Activated naive CD4-positive, alpha-beta T cell treated with anti-CD3 and anti-CD28 coated beads for 36 hours (primary cell): ENCODE measurements at regions of chr2 and their contacts with region 1.

Region 1: DNA sequence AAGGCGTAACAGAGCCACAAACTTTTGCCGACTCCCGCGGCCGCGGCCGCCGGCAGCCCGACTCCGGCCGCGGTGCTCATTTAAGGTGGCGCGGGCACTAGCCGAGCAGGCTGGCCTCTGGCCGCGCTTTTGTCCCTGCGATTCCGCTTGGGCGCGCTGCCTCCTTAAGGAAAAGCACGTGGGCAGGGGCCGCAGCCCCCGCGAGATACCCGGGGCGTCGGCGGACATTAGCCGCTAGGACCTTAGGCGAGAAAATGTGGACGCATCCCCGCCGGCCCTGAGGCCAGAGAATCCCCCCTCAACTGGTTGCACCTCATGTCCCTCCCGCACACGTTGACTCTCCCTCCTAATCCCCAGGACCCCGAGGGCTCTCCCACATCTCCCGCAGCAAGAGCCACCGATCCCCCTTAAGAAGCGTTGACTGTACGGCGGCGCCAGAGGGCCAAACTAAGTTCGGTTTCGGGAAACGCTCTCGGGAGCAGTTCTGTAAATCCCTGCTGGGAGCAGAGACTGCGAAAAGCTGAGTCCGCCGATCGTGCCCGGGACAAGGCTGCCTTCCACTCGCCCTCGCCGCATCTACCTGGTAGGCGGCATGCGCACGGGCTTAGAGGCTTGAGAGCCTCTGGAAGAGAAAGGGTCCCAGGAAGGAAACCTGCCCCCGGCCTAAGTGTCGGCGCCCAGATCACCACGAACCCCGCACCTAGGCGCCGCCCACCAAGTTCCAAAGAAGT is 1.7 kb upstream of the SATB2 start:
- DNase-seq: peak; percentile 73
- H3K4me3 Mint-ChIP-seq: peak overlapping the region; percentile 90
- H3K27ac Mint-ChIP-seq: peak overlapping the region; percentile 47
- H3K4me1 Mint-ChIP-seq: peaks cover 29% of the 10 kb centered on the region
- H3K27me3 Mint-ChIP-seq: peaks cover 56% of the 10 kb centered on the region

Region 2: GRCh38 chr2:197813093-197813787 is 1646.2 kb before region 1 on chr2:
- CTCF ChIA-PET with region 1: no interaction called
- intact Hi-C with region 1: loop called (anchors 1 kb)
- DNase-seq: no peak
- H3K4me3 Mint-ChIP-seq: no peak overlapping the region
- H3K27ac Mint-ChIP-seq: no peak overlapping the region
- H3K4me1 Mint-ChIP-seq: peaks cover 57% of the 10 kb centered on the region
- H3K27me3 Mint-ChIP-seq: no peaks in the 10 kb centered on the region

Region 3: DNA sequence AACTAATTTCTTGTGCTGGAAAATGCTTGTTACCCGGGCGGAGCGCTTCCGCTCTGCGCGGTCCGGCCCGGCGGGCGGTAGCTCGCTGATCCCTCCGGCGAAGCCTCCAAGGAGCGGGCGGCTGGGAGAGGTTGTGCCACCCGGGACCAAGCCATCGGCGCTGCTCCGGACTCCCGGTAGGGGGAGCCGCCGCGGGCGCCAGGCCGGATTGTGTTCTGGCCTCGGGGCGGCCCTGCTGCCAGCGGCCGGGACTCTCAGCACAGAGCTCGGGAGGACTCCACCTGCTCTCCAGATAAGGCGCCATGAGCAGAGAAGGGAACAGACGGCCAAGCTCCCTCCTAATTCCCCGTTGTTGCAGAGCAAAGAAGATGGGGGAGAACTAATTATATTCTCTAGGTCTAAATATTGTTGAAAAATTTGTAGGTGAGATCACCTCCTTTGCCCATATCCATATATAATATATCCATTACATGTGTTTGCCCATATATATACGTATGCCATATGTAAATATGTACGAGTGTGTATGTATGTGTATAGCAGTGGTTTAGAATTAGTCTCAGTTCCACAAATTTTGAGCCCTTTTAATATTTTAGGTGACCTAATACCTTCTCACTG is 12.1 kb after region 1 on chr2:
- CTCF ChIA-PET with region 1: interaction called, 3 read pairs
- intact Hi-C with region 1: loop called (anchors 1 kb)
- DNase-seq: peak; percentile 44
- H3K4me3 Mint-ChIP-seq: no peak overlapping the region
- H3K27ac Mint-ChIP-seq: no peak overlapping the region
- H3K4me1 Mint-ChIP-seq: peaks cover 25% of the 10 kb centered on the region
- H3K27me3 Mint-ChIP-seq: peaks cover 78% of the 10 kb centered on the region

Region 4: DNA sequence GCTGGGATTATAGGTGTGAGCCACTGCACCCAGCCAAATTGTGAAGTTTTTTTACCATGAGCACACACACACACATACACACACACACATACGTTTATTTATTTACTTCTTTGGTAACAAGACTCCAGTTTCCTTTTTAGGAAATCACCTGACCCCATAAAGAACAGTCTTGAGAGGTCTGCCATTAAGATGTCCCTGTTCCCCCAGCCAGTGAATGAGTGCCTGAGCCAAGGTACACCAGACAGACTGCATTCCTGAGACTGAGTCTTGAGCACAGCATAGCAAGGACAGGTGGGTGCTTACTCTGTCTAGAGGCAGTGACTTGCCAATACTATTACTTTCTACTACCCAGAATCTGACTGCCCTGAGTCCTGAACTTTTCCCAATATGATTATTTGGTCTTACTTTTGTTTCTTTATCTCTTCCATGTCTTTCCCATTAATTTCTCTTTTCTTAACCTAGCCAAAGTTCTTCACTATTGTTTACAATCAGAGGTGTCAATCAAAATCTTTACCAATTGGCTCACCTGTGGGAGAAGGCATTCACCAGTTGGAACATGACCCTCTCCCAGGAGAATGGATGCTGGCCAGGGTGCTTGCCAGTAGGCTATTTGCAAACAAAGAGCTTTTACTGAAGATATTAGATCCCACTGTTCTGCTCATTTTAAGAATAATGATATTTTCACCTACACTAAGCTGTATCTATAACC is 165.6 kb after region 1 on chr2:
- CTCF ChIA-PET with region 1: no interaction called
- intact Hi-C with region 1: no loop called
- DNase-seq: no peak
- H3K4me3 Mint-ChIP-seq: no peak overlapping the region
- H3K27ac Mint-ChIP-seq: no peak overlapping the region
- H3K4me1 Mint-ChIP-seq: no peaks in the 10 kb centered on the region
- H3K27me3 Mint-ChIP-seq: peaks cover 4% of the 10 kb centered on the region

Region 5: GRCh38 chr2:199850718-199851500 is 391.5 kb after region 1 on chr2 and contains the start of gene FTCDNL1:
- CTCF ChIA-PET with region 1: no interaction called
- intact Hi-C with region 1: loop called (anchors 10 kb)
- DNase-seq: peak; percentile 67
- H3K4me3 Mint-ChIP-seq: peak within 1 kb of the TSS; percentile 96
- H3K27ac Mint-ChIP-seq: peak within 1 kb of the TSS; percentile 88
- H3K4me1 Mint-ChIP-seq: peaks cover 9% of the 10 kb centered on the region
- H3K27me3 Mint-ChIP-seq: no peaks in the 10 kb centered on the region
- total RNA-seq, gene FTCDNL1: 3.8 to 5.2 TPM